Left colon (tissue), 2 donors: ENCODE measurements at regions of chr17 and their contacts with region 1.

Region 1: DNA sequence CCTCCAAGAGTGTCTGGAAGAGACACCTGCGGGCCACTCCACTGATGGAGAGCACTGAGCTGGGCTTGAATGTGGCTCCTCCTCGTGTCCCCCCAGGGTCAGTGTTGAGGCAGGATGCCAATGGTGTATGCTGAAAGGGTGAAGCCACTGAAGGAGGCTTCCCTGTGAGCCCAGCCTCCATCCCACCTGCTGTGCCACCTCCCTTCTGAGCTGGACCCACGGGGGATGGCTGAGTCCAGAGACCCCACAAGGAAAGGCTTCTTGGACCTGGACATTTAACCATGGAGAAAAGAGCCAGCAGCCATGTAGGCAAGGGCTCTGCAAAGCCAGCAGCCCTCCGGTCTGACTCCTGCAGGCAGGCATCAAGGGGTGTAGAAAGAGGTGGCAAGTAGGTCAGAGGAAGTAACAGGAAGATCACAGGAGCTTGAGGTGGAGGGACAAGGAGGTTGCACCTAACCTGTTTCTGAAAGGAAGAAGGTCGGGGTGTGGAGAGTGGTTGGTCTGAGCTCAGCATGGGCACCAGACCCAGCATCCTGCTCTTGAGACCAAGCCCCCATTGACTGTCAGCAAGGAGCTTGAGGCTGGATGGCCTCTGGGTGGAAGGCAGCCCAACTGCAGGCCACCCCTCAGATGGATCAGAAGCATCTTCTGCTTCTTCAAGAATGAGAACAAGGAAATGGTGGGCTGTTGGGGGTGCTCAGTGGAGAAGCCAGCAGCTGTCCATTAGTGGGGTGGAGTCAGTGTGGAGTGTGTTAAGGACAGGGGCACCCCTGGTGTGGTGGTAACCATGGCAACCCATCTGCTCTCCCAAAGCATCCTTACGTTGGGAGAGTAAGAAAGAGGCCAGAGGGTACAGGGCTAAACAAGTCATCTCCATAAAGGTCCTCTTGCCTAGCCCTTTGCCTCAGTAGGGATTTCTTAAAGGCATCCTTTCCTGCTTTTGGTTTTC is 80.7 kb downstream of the PLD6 start:
- DNase-seq: no peak
- ATAC-seq: no peak

Region 2: DNA sequence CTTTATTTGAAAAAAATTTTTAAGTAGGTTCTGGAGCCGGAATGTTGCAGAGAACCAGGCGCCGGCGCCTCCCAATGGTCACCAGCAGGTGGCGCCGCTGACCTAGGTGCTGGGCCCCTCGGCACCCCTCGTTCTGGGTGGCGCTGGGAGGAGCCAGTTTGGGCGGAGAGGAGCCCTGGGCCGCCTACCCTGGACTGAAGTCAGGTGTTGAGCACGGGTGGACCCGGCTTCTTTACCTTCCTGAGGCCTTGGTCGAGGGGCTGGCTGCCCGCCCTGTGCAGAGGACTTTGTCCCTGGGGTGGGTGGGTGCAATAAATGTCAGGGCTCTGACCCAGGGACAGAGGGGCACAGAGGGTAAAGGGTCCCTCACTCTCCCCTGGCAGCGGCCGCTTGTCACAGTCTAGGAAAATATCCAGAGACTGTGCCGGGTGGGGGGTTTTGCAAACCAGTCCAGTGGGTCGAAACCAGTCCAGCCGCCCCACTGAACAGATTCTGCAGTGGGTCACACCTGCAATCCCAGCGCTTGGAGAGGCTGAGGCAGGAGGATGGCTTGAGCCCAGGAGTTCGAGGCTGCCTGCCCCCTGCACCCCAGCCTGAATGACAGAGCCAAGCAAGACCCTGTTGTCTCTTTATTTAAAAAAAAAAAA is 123.4 kb before region 1 on chr17:
- intact Hi-C with region 1: loop called in 1 of 2 experiments (anchors 10 kb)
- DNase-seq: peak; percentile 65 to 87
- ATAC-seq: peak; percentile 94

Region 3: GRCh38 chr17:17088526-17089525 is 36.6 kb before region 1 on chr17:
- intact Hi-C with region 1: no loop called
- DNase-seq: peak in 1 of 2 donors; percentile 22
- ATAC-seq: no peak

Region 4: GRCh38 chr17:17156107-17156506 is 30.7 kb after region 1 on chr17:
- intact Hi-C with region 1: no loop called
- DNase-seq: no peak
- ATAC-seq: no peak

Region 5: DNA sequence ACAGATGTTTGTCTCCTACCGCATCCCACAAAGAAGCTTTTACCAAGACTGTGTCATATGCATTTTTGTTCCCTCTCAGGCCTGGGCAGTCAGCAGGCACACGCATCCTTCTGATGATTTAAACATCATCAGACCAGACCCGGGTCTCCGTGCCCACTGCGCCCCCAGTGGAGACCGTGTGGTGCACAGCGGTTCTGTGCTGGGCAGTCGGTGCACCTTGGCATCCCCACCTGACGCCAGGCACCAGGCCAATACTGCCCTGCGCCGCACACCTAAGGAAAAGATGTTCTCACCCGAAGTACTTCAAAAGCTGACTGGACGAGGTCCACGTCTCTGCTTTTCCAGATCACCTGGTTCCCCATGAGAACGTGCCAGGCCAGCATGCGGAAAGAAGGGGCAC is 91.4 kb after region 1 on chr17:
- intact Hi-C with region 1: no loop called
- DNase-seq: no peak
- ATAC-seq: no peak

Region 6: DNA sequence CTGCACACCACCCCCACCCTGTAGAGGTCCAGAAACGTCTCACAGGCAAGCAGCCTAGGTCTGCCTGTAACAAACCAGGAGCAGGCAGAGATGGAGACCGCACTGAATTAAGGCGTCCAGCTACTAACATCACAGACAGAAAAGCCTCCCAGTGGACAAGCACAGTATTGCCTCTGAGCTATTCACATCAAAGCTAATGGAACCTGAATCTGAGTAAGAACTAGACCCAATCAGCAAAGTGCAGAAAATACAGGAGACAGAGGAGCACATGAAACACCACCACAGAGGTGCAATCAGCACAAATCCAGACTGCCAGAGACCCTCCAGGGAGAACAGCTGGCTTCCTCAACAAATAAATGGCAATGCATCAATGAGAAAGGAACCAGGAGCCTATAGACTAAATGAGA is 488.3 kb after region 1 on chr17:
- intact Hi-C with region 1: no loop called
- DNase-seq: peak in 1 of 2 donors; percentile 52
- ATAC-seq: peak; percentile 94